PC-9 (cell line): ENCODE measurements at regions of chr1 and their contacts with region 1.

Region 1: GRCh38 chr1:174726167-174726879 is 273.4 kb upstream of the CACYBP start:
- DNase-seq: no peak
- H3K4me3 ChIP-seq: no peak overlapping the region
- H3K27ac ChIP-seq: no peak overlapping the region
- H3K4me1 ChIP-seq: no peaks in the 10 kb centered on the region
- H3K27me3 ChIP-seq: no peaks in the 10 kb centered on the region
- CTCF ChIP-seq: peak; percentile 77

Region 2: DNA sequence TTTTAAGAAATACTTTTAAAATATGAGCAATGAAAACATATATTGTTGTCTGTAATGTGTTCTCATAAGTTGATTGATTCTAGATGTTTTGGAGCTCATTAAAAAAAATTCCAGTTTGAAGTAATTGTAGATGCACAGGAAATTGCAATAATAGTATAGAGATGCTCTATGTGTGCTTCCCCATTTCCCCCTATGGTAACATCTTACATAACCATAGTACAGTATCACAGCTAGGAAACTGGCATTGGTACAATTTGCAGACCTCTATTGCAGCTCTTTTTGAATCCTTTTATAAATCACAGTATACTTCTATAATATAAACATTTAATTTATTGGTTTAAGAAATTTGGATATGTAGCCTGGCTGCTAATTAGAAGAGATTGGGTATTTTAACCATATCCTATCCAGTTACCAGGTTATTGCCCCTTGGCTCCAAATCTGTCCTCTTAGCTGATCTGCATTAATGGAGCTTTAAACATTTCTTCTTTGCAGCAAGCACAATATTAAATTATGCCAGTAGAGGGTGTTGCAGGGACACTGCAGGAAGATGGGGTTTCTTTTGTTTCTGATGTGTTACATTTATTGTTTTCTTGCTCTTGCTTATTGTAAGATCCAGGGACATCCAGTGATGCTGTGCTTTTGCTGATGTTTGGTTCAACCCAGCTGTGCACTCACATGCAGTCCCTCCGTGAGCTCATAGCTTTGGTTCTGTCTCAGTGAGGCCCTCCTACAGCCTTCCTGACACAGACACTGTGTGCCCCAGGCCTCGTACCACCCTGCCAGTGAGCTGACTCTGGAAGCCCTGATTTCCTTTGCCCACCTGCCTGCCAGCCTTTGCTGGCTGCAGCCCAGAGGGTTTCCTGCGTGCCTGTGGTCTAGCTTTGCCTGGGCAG is 463.7 kb before region 1 on chr1:
- CTCF ChIA-PET with region 1: interaction called, 23 read pairs
- POLR2A ChIA-PET with region 1: no interaction called
- intact Hi-C with region 1: loop called (anchors 1 kb)
- DNase-seq: peak in 1 of 2 experiments; percentile 6
- H3K4me3 ChIP-seq: no peak overlapping the region
- H3K27ac ChIP-seq: no peak overlapping the region
- H3K4me1 ChIP-seq: no peaks in the 10 kb centered on the region
- H3K27me3 ChIP-seq: no peaks in the 10 kb centered on the region
- CTCF ChIP-seq: peak; percentile 84